ENCODE measurements at regions of chr2 and their contacts with region 1.

Region 1: DNA sequence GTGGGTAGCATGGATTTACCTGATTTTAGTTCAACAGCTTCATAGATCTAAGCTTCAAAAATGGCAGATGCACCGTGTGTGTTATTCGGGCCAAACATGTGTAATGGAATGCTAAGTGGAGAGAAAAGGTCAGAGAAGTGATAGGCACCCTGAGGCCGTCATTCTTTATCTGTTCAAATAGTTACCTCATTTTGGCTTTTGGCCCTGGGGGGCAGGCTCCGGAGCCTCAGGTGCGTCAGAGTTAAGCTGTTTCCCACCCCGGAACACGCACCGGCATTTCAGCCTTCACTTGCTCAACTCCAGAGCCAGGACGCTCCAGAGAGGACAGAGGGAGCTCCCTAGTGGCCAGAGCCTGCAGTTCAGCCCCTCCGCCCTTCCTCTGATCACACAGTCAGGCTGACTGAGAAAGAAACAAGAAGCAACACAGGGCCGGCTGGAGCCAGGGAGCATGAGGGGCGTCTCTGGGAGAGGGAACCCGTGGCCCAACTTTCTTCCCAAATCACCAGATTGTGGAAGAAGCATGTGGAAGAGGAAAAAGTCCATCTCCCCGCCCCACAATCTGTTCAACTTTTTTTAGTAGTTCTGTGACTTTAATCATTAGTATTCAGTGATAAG is 135.2 kb upstream of the EPC2 start:
- DNase-seq: peak; percentile 21
- H3K4me3 ChIP-seq: no peak overlapping the region
- CTCF ChIP-seq: peak; percentile 96

Region 2: GRCh38 chr2:147937744-147938349 is 571.5 kb before region 1 on chr2:
- CTCF ChIA-PET with region 1: interaction called, 21 read pairs
- POLR2A ChIA-PET with region 1: no interaction called
- DNase-seq: no peak
- H3K4me3 ChIP-seq: no peak overlapping the region
- CTCF ChIP-seq: peak; percentile 67

Region 3: GRCh38 chr2:147980940-147981528 is 528.4 kb before region 1 on chr2:
- CTCF ChIA-PET with region 1: interaction called, 12 read pairs
- POLR2A ChIA-PET with region 1: no interaction called
- DNase-seq: no peak
- H3K4me3 ChIP-seq: no peak overlapping the region
- CTCF ChIP-seq: no peak

Region 4: DNA sequence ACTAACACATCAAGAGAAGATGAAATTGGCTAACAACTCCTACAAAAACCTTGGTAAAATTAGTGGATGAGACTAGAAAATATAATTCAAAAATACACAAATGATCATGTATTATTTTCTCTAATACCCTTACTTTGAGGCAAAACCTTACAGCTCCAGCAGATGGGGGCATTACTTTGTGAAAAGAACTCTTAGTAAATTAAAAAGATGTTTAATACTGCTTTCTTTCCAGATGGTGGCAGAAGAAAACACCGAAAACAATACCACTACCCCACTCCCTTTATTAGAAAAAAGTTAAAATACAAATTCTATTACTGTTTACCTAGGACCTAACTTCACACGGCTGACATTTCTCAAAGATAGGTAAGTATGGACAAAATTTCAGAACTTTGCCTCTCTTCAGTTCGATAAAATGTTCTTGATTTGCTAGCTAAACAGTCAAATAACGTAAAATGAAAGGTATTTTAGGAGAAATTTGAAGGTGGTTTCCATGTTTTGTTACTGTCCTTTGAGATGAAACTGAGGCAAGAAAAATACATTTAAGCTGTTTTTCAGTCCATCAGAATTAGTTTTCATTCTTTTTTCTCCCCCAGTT is 519.5 kb before region 1 on chr2:
- CTCF ChIA-PET with region 1: interaction called, 126 read pairs
- POLR2A ChIA-PET with region 1: interaction called, 3 read pairs
- DNase-seq: peak; percentile 17
- H3K4me3 ChIP-seq: no peak overlapping the region
- CTCF ChIP-seq: peak; percentile 39

Region 5: GRCh38 chr2:148020111-148021058 is 489.0 kb before region 1 on chr2 and contains the start of gene ORC4:
- CTCF ChIA-PET with region 1: interaction called, 13 read pairs
- POLR2A ChIA-PET with region 1: no interaction called
- DNase-seq: peak; percentile 96
- H3K4me3 ChIP-seq: peak within 1 kb of the TSS; percentile 98
- CTCF ChIP-seq: peak; percentile 61

Region 6: GRCh38 chr2:148483666-148484065 is 25.7 kb before region 1 on chr2:
- CTCF ChIA-PET with region 1: interaction called, 17 read pairs
- POLR2A ChIA-PET with region 1: no interaction called
- DNase-seq: no peak
- H3K4me3 ChIP-seq: no peak overlapping the region
- CTCF ChIP-seq: no peak

Region 7: DNA sequence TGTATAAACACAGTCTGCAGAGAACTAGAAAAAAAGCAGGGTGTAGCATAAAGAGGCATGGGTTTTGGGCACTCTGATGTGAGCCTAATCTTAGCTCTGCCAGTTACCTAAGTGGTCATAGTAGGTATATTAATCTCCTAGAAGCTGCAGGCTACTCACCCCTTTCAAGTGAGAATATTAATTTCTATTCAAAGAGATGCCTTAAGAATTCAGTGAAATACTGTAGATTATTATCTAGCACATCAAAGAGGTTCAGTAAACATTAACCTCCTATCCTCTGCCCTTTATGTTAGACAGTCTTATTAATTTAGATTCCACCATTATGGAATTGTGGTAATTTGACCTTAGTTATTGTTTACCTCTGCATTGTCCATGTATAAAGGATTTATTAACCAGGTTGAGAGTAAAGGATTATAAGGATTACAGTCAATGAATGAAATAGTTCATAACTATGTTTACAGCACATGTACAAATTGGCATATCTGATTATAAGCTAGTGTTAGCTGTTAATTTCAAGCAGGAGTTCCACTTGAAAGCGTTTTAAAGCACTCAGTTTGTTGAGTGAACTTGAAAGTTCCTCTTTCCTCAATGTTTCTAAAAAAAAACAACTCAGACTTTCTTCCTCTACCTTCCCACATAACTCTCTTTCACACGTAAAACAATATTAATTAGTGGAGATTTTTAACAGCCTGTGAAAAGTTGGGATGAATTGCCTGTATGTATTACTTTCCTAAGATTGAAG is 15.4 kb before region 1 on chr2:
- CTCF ChIA-PET with region 1: interaction called, 25 read pairs
- POLR2A ChIA-PET with region 1: no interaction called
- DNase-seq: no peak
- H3K4me3 ChIP-seq: no peak overlapping the region
- CTCF ChIP-seq: no peak

Region 8: DNA sequence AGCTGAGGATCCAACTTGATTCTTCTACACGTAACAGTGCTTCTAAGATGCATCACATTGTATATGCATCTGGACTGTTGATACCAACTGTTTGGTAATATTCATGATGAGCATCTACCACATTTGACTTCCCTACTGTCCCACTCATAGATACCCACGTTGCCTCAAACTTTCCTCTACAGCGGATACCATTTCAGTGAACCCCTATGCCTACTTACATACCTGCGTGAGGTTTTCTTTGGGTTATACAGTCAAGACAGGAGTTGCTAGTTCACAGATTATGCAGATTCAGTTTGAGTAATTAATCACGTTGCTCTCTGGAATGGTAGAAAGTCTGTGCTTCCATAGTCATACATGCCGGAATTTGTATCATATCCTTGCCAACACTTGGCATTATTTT is 175.1 kb after region 1 on chr2:
- CTCF ChIA-PET with region 1: no interaction called
- POLR2A ChIA-PET with region 1: no interaction called
- DNase-seq: no peak
- H3K4me3 ChIP-seq: no peak overlapping the region
- CTCF ChIP-seq: no peak